MCF 10A (cell line): ENCODE measurements at regions of chr19 and their contacts with region 1.

Region 1: GRCh38 chr19:9075064-9075949 is 11.6 kb upstream of the OR1M1 start:
- DNase-seq: peak; percentile 100
- H3K4me3 Mint-ChIP-seq: peak overlapping the region; percentile 65
- H3K27ac Mint-ChIP-seq: peak overlapping the region; percentile 57
- H3K4me1 Mint-ChIP-seq: peaks cover 14% of the 10 kb centered on the region
- H3K27me3 Mint-ChIP-seq: no peaks in the 10 kb centered on the region
- CTCF ChIP-seq: no peak

Region 2: DNA sequence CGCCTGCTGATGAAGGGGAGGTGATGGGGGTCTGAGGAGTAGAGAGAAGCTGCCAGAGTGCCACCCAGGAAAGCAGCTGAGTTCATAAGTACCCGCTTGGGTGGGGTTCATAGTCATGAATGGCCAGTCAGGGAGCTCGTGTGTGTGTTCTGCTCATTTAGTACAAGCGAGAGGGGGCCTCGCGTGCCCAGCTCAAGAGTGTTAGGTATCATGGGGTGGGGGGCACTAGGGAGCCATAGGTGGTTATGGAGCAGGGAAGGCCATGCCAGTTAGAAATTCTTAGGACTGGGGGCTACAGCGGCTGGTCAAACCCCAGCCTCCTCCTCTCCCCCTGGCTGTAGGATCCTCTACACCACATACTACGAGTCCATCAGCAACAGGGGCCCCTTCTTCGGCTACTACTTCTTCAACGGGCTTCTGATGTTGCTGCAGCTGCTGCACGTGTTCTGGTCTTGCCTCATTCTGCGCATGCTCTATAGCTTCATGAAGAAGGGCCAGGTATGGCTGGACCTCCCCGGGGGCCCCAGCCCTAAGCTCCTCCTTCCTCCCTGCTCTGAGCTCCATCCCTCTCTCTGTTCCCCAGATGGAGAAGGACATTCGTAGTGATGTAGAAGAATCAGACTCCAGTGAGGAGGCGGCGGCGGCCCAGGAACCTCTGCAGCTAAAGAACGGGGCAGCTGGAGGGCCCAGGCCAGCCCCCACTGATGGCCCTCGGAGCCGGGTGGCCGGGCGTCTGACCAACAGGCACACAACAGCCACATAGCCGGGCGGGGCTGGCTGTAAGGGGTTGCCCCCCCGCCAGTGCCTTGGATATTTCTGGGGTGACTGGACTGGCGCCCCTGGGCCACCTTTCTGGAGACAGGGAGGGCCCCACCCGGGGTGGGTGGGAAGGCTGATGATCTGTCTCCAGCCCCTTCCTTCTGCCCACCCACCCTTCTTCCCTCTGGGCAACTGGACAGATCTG is 813.7 kb before region 1 on chr19:
- CTCF ChIA-PET with region 1: no interaction called
- POLR2A ChIA-PET with region 1: no interaction called
- intact Hi-C with region 1: loop called (anchors 10 kb)
- DNase-seq: no peak
- H3K4me3 Mint-ChIP-seq: no peak overlapping the region
- H3K27ac Mint-ChIP-seq: no peak overlapping the region
- H3K4me1 Mint-ChIP-seq: no peaks in the 10 kb centered on the region
- H3K27me3 Mint-ChIP-seq: no peaks in the 10 kb centered on the region
- CTCF ChIP-seq: no peak

Region 3: DNA sequence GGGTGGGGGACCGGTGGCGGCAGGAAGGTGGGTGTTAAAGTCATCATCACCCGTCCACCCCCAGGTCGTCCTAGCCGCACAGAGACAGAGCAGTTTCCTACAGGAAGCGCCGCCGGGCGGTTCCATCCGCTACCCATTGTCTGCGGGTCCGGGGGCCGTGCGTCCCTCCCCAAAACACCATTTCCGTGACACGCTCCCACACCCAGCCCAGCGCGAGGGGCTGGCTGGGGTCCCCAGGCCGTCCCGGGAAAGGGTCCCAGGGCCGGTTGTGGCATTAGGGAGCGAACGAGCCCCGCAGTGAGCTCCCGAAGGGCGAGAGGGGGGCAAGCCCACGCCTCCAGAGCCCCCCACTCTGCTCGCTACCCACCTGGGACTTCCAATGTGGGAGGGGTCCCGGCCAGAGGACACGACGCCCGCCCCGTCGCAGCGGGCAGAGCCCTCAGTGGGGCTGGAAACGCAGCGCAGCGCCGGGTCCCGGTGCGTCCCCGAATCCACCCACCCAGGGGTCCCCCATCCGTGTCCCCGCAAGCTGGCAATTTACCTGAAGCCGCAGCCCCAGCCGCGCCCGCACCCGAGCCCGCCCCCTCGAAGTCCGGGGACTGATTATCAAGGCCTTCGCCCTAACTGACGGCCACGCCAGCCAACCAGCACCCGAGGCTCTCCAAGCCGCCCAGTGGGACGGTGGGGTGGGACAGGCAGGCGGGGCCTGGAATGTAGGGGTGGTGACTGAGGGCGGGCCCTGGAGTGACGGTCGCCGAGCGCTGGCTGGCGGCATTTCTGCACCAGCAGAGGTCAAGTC is 732.4 kb before region 1 on chr19 and contains the start of gene KANK3:
- CTCF ChIA-PET with region 1: no interaction called
- POLR2A ChIA-PET with region 1: no interaction called
- intact Hi-C with region 1: loop called (anchors 10 kb)
- DNase-seq: no peak
- H3K4me3 Mint-ChIP-seq: no peak within 1 kb of the TSS
- H3K27ac Mint-ChIP-seq: no peak within 1 kb of the TSS
- H3K4me1 Mint-ChIP-seq: no peaks in the 10 kb centered on the region
- H3K27me3 Mint-ChIP-seq: no peaks in the 10 kb centered on the region
- CTCF ChIP-seq: no peak
- total RNA-seq, gene KANK3: 0.79 and 1.2 TPM in 2 replicates

Region 4: GRCh38 chr19:8580710-8581281 is 494.5 kb before region 1 on chr19:
- CTCF ChIA-PET with region 1: interaction called, 3 read pairs
- POLR2A ChIA-PET with region 1: no interaction called
- intact Hi-C with region 1: loop called (anchors 10 kb)
- DNase-seq: peak; percentile 82
- H3K4me3 Mint-ChIP-seq: no peak overlapping the region
- H3K27ac Mint-ChIP-seq: no peak overlapping the region
- H3K4me1 Mint-ChIP-seq: peaks cover 10% of the 10 kb centered on the region
- H3K27me3 Mint-ChIP-seq: peaks cover 10% of the 10 kb centered on the region
- CTCF ChIP-seq: peak; percentile 99

Region 5: GRCh38 chr19:8615813-8616596 is 459.3 kb before region 1 on chr19:
- CTCF ChIA-PET with region 1: interaction called, 3 read pairs
- POLR2A ChIA-PET with region 1: no interaction called
- intact Hi-C with region 1: loop called (anchors 1 kb)
- DNase-seq: peak; percentile 60
- H3K4me3 Mint-ChIP-seq: no peak overlapping the region
- H3K27ac Mint-ChIP-seq: no peak overlapping the region
- H3K4me1 Mint-ChIP-seq: no peaks in the 10 kb centered on the region
- H3K27me3 Mint-ChIP-seq: peaks cover 29% of the 10 kb centered on the region
- CTCF ChIP-seq: peak; percentile 87

Region 6: GRCh38 chr19:8654591-8655339 is 420.5 kb before region 1 on chr19:
- CTCF ChIA-PET with region 1: interaction called, 24 read pairs
- POLR2A ChIA-PET with region 1: no interaction called
- intact Hi-C with region 1: no loop called
- DNase-seq: peak; percentile 49
- H3K4me3 Mint-ChIP-seq: peak overlapping the region; percentile 45
- H3K27ac Mint-ChIP-seq: no peak overlapping the region
- H3K4me1 Mint-ChIP-seq: no peaks in the 10 kb centered on the region
- H3K27me3 Mint-ChIP-seq: no peaks in the 10 kb centered on the region
- CTCF ChIP-seq: peak; percentile 96

Region 7: DNA sequence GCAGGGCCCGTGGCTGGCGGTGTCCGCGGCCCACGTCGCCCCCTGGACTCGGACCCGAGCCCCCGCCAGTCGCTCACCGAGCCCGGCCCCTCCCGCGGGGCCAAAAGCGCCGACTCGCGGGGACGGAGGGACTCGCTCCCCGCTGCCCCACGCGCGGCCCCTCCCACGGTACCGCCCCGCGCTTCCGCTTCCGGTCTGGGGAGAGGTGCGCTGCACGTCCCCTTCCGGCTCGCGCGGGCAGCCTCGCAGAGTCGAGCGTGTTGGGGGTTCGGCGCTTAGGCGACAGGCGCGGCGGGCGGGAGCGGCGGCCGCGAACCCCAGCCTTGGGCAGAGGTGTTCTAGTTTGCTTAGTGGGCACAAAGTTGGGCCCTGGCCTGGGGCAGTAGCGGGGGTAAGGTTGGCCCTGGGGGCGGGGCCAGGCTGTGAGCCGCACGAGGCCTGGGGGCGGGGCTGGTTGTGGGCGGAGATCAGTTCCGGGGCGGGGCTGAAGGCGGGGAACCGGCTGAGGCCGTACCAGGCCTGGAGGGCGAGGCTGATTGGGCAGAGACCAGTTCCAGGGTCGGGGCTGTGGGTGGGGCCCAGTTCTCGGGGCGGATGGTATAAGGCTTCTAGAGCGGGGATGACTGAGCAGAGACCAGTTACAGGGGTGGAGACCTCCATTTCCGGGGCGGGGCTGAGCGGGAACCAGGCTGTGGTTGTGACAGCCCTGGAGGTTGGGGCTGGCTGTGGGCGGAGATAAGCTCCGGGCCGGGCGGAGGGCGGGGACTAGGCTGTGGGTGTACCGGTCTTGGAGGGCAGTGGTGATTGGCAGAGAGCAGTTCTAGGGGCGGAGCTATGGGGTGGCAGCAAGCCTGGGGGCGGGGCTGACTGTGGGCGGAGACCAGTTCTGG is 242.9 kb before region 1 on chr19 and contains the starts of genes MBD3L1 and ZNF558:
- CTCF ChIA-PET with region 1: no interaction called
- POLR2A ChIA-PET with region 1: interaction called, 6 read pairs
- intact Hi-C with region 1: loop called (anchors 1 kb)
- DNase-seq: peak; percentile 98
- H3K4me3 Mint-ChIP-seq: peak within 1 kb of the TSS; percentile 82
- H3K27ac Mint-ChIP-seq: peak within 1 kb of the TSS; percentile 97
- H3K4me1 Mint-ChIP-seq: peaks cover 5% of the 10 kb centered on the region
- H3K27me3 Mint-ChIP-seq: no peaks in the 10 kb centered on the region
- CTCF ChIP-seq: no peak
- total RNA-seq, gene MBD3L1: not detected in 2 replicates
- total RNA-seq, gene ZNF558: 34.1 and 36.5 TPM in 2 replicates

Region 8: GRCh38 chr19:8897106-8897505 is 178.2 kb before region 1 on chr19:
- CTCF ChIA-PET with region 1: no interaction called
- POLR2A ChIA-PET with region 1: no interaction called
- intact Hi-C with region 1: no loop called
- DNase-seq: no peak
- H3K4me3 Mint-ChIP-seq: no peak overlapping the region
- H3K27ac Mint-ChIP-seq: no peak overlapping the region
- H3K4me1 Mint-ChIP-seq: no peaks in the 10 kb centered on the region
- H3K27me3 Mint-ChIP-seq: no peaks in the 10 kb centered on the region
- CTCF ChIP-seq: no peak

Region 9: GRCh38 chr19:9171393-9171991 is 96.2 kb after region 1 on chr19:
- CTCF ChIA-PET with region 1: no interaction called
- POLR2A ChIA-PET with region 1: no interaction called
- intact Hi-C with region 1: no loop called
- DNase-seq: no peak
- H3K4me3 Mint-ChIP-seq: no peak overlapping the region
- H3K27ac Mint-ChIP-seq: no peak overlapping the region
- H3K4me1 Mint-ChIP-seq: no peaks in the 10 kb centered on the region
- H3K27me3 Mint-ChIP-seq: no peaks in the 10 kb centered on the region
- CTCF ChIP-seq: no peak